Activated CD4-positive, alpha-beta memory T cell treated with anti-CD3 and anti-CD28 coated beads for 36 hours (primary cell): ENCODE measurements at regions of chr2 and their contacts with region 1.

Region 1: GRCh38 chr2:80238692-80239469 is 65.7 kb downstream of the LRRTM1 start:
- DNase-seq: peak; percentile 12
- H3K4me3 Mint-ChIP-seq: no peak overlapping the region
- H3K27ac Mint-ChIP-seq: no peak overlapping the region
- H3K4me1 Mint-ChIP-seq: no peaks in the 10 kb centered on the region
- H3K27me3 Mint-ChIP-seq: no peaks in the 10 kb centered on the region

Region 2: GRCh38 chr2:80073134-80073561 is 165.7 kb before region 1 on chr2:
- CTCF ChIA-PET with region 1: no interaction called
- POLR2A ChIA-PET with region 1: no interaction called
- intact Hi-C with region 1: loop called (anchors 10 kb)
- DNase-seq: no peak
- H3K4me3 Mint-ChIP-seq: no peak overlapping the region
- H3K27ac Mint-ChIP-seq: no peak overlapping the region
- H3K4me1 Mint-ChIP-seq: no peaks in the 10 kb centered on the region
- H3K27me3 Mint-ChIP-seq: peaks cover 1% of the 10 kb centered on the region

Region 3: GRCh38 chr2:80199504-80199903 is 39.4 kb before region 1 on chr2:
- CTCF ChIA-PET with region 1: no interaction called
- POLR2A ChIA-PET with region 1: no interaction called
- intact Hi-C with region 1: no loop called
- DNase-seq: no peak
- H3K4me3 Mint-ChIP-seq: no peak overlapping the region
- H3K27ac Mint-ChIP-seq: no peak overlapping the region
- H3K4me1 Mint-ChIP-seq: no peaks in the 10 kb centered on the region
- H3K27me3 Mint-ChIP-seq: no peaks in the 10 kb centered on the region